Left cardiac atrium (tissue), 4 donors: ENCODE measurements at regions of chr14 and their contacts with region 1.

Region 1: DNA sequence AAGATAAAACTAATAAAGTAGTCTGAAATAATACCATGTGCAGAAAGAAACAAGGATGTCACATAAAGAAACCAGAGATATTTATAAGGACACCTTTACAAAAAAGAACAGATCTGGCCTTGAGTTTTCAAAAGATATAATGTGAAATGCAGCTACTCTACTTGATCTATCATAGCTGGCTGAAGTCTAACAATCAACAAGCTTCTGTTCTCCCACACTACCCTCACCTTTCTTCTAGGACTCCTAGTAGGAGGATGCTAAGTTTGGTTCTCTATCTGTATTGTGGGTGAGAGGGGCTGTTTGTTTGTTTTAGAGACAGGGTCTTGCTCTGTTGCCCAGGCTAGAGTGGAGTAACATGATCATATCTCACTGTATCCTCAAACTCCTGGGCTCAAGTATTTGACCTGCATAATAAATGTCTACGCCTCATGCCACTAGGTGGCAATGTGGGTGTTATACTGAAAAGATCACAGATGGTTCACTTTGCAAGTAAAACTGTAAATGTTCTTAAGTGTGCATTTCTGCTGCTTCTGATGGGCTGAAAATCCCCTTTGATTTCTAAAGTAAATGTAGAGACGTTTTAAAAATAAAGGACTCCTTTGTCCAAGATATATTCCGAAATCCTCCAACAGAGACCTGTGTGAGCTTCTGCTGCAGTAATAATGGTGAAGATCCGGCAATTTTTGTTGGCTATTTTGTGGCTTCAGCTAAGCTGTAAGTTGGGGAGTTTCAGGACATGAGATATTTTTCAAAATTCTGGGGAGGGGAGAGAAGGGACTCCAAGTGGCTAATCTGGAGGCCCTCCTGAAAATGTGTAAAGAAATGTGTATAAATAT is 269.3 kb downstream of the DAD1 start:
- DNase-seq: peak; percentile 60
- ATAC-seq: peak in 1 of 2 donors; percentile 55

Region 2: GRCh38 chr14:22370084-22370847 is 50.5 kb after region 1 on chr14:
- intact Hi-C with region 1: loop called (anchors 2 to 5 kb)
- DNase-seq: peak; percentile 53
- ATAC-seq: peak; percentile 94 to 97